T-cell (primary cell): ENCODE measurements at regions of chr11 and their contacts with region 1.

Region 1: GRCh38 chr11:22151649-22152197 is 41.2 kb upstream of the ANO5 start:
- DNase-seq: no peak
- ATAC-seq: no peak
- H3K4me3 ChIP-seq: no peak overlapping the region
- H3K4me3 Mint-ChIP-seq: no peak overlapping the region
- H3K27ac ChIP-seq: no peak overlapping the region
- H3K27ac Mint-ChIP-seq: no peak overlapping the region
- H3K4me1 ChIP-seq: no peaks in the 10 kb centered on the region
- H3K4me1 Mint-ChIP-seq: no peaks in the 10 kb centered on the region
- H3K27me3 ChIP-seq: no peaks in the 10 kb centered on the region
- H3K27me3 Mint-ChIP-seq: no peaks in the 10 kb centered on the region

Region 2: GRCh38 chr11:22177186-22177585 is 25.5 kb after region 1 on chr11:
- CTCF ChIA-PET with region 1: no interaction called
- POLR2A ChIA-PET with region 1: interaction called in 1 of 2 experiments, 10 read pairs
- DNase-seq: no peak
- ATAC-seq: no peak
- H3K4me3 ChIP-seq: no peak overlapping the region
- H3K4me3 Mint-ChIP-seq: no peak overlapping the region
- H3K27ac ChIP-seq: no peak overlapping the region
- H3K27ac Mint-ChIP-seq: no peak overlapping the region
- H3K4me1 ChIP-seq: no peaks in the 10 kb centered on the region
- H3K4me1 Mint-ChIP-seq: no peaks in the 10 kb centered on the region
- H3K27me3 ChIP-seq: no peaks in the 10 kb centered on the region
- H3K27me3 Mint-ChIP-seq: no peaks in the 10 kb centered on the region